ENCODE measurements at regions of chr13 and their contacts with region 1.

Region 1: GRCh38 chr13:73754727-73755292 is 379.4 kb downstream of the KLF12 start:
- DNase-seq: peak in 15 of 42 donors; percentile 15 to 79 (median 49)

Region 2: DNA sequence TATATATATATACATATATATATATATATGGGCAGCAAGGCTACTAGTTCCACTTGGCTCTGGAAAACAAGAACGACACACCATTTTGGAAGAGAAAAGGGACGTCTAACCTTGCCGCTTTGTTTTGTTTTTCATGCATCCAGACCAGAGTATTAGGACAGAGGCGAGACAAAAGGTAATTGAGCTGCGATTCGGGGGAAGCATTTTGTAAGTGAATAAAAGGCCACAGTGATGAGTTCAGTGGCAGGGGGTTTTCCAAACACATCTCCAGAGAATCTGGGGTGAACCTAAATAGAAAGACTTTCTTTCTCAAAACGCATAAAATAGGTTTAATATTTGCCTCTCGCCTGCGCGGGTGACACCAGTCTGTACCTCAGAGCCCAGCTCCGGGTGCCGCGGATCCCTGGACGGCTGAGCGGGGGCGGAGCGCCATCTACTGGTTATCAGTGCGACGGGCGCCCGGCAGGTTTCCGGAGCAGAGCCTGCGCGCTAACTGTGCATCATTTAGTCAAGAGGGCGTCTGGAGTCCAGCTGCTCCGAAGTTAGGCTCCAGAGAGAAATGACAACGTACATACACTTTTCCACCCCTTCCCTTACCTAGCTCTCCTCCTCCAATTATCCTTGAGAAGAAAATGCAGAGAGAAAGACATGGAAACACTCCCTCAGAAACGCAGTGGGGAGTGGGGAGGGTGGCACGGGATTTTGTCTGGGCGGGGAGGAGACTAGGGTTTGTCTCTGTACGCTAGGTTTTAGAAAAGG is 1464.8 kb after region 1 on chr13:
- intact Hi-C with region 1: loop called (anchors 10 kb)
- DNase-seq: peak; percentile 80 to 96 (median 90)

Measured in head of caudate nucleus (tissue), 42 donors.